ENCODE measurements at regions of chr19 and their contacts with region 1.

Region 1: GRCh38 chr19:33831825-33832224 is 35.2 kb downstream of the KCTD15 start:
- DNase-seq: peak; percentile 50

Region 2: GRCh38 chr19:34556488-34556887 is 724.7 kb after region 1 on chr19:
- intact Hi-C with region 1: loop called in 1 of 2 experiments (anchors 5 kb)
- DNase-seq: no peak